ENCODE measurements at regions of chr16 and their contacts with region 1.

Region 1: GRCh38 chr16:30786936-30787612 is at the start of gene ZNF629:
- DNase-seq: peak; percentile 36 to 38 (median 37)
- H3K4me3 ChIP-seq: peak within 1 kb of the TSS; percentile 94 to 99 (median 94)
- H3K4me3 Mint-ChIP-seq: peak within 1 kb of the TSS; percentile 91 to 92
- H3K27ac ChIP-seq: peak within 1 kb of the TSS; percentile 29 to 67
- H3K27ac Mint-ChIP-seq: peak within 1 kb of the TSS in 4 of 7 donors; percentile 2 to 77 (median 32)
- H3K4me1 ChIP-seq: peaks cover 15 to 19% of the 10 kb centered on the region in 2 donors
- H3K4me1 Mint-ChIP-seq: peaks cover 28% of the 10 kb centered on the region
- H3K27me3 ChIP-seq: no peaks in the 10 kb centered on the region
- H3K27me3 Mint-ChIP-seq: peaks cover 0 to 8% (median 4%) of the 10 kb centered on the region in 3 donors
- CTCF ChIP-seq: no peak
- polyA plus RNA-seq, gene ZNF629: 0.27 to 2.0 (median 0.73) TPM

Region 2: GRCh38 chr16:30805370-30806169 is 18.5 kb after region 1 on chr16:
- intact Hi-C with region 1: loop called in 1 of 2 experiments (anchors 2 kb)
- DNase-seq: peak; percentile 50 to 62 (median 56)
- H3K4me3 ChIP-seq: peak overlapping the region; percentile 59 to 97 (median 82)
- H3K4me3 Mint-ChIP-seq: peak overlapping the region; percentile 91
- H3K27ac ChIP-seq: peak overlapping the region; percentile 59 to 82
- H3K27ac Mint-ChIP-seq: peak overlapping the region; percentile 72 to 89 (median 79)
- H3K4me1 ChIP-seq: peaks cover 45 to 51% of the 10 kb centered on the region in 2 donors
- H3K4me1 Mint-ChIP-seq: peaks cover 41% of the 10 kb centered on the region
- H3K27me3 ChIP-seq: no peaks in the 10 kb centered on the region
- H3K27me3 Mint-ChIP-seq: peaks cover 0 to 4% (median 0%) of the 10 kb centered on the region in 3 donors
- CTCF ChIP-seq: no peak